Kidney (tissue), 22 donors: ENCODE measurements at regions of chr4 and their contacts with region 1.

Region 1: GRCh38 chr4:37793562-37793961 is 32.9 kb upstream of the PGM2 start:
- DNase-seq: no peak
- H3K4me3 ChIP-seq: no peak overlapping the region
- H3K27ac ChIP-seq: no peak overlapping the region
- H3K4me1 ChIP-seq: peaks cover 0 to 6% (median 0%) of the 10 kb centered on the region in 3 donors
- H3K27me3 ChIP-seq: no peaks in the 10 kb centered on the region
- CTCF ChIP-seq: peak; percentile 18

Region 2: DNA sequence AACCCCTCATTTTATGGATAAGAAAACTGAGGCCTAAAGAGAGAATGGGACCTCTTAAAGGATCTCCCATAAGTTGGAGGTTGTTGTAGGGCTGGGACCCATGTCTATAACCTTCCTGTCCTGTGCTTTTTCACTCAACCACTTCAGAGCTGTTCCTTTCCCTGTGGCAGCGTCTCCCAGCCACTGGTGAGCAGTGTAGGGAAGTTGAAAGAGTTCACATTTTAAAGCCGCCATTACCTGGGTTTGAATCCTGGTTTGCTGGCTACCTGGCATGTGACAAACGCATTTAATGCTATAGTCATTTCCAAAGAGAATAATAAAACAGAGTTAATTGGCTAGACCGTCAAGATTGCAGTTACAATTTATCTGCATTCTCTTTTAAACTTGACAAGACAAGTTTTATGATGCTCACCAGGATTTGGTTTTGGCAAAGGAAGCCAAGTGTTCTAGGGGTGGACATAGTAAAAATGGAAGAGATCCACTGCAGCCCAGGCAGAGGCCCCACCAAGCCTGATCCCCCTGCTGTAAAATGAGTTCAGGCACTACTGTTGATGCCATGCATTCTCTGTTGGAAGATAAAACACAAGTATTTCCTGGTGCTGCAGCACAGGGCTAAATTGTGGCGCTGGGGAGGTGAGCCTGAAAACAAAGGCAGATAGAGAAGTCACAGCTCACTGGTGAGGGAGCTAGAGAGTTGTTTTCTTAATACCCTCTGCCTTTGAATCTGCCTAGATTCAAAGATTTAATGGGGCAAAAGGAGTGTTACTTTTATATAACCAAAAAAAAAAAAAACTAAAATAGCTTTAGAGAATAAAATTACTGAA is 330.3 kb before region 1 on chr4:
- intact Hi-C with region 1: no loop called
- DNase-seq: no peak
- H3K4me3 ChIP-seq: no peak overlapping the region
- H3K27ac ChIP-seq: no peak overlapping the region
- H3K4me1 ChIP-seq: peaks cover 0 to 7% (median 0%) of the 10 kb centered on the region in 3 donors
- H3K27me3 ChIP-seq: no peaks in the 10 kb centered on the region
- CTCF ChIP-seq: no peak

Region 3: GRCh38 chr4:37603070-37603468 is 190.5 kb before region 1 on chr4:
- intact Hi-C with region 1: loop called (anchors 10 kb)
- DNase-seq: peak; percentile 80 to 92 (median 89)
- H3K4me3 ChIP-seq: no peak overlapping the region
- H3K27ac ChIP-seq: no peak overlapping the region
- H3K4me1 ChIP-seq: peaks cover 0 to 13% (median 5%) of the 10 kb centered on the region in 3 donors
- H3K27me3 ChIP-seq: no peaks in the 10 kb centered on the region
- CTCF ChIP-seq: peak; percentile 99